A549 (cell line): ENCODE measurements at regions of chr19 and their contacts with region 1.

Region 1: GRCh38 chr19:48826606-48827020 is 9.7 kb downstream of the HSD17B14 start:
- DNase-seq: peak in 1 of 2 experiments; percentile 56
- ATAC-seq: peak; percentile 50 to 52; a peak in 2 of 6 replicates
- H3K4me3 ChIP-seq: no peak overlapping the region
- H3K27ac ChIP-seq: no peak overlapping the region
- H3K4me1 ChIP-seq: no peaks in the 10 kb centered on the region
- CTCF ChIP-seq: no peak
- EP300 ChIP-seq: no peak
- POLR2A ChIP-seq: no peak
- RAD21 ChIP-seq: no peak

Region 2: DNA sequence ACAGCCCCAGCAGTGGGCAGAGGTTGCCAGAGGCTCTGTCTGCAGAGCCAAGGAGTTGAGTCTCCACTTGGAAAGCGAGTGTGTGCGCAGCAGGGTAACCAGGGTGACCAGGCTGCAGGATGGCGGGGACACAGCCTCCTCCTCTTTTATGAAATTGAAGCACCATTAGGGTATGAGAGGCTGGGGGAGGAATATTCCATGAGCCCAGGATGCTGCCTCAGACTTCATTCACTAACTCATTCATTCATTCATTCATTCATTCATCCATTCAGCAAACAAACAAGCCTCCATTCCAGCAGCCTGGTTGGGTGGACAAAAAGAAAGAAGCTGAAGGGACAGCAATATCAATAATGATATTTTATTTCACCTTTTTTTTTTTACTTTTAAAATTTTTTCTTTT is 308.4 kb before region 1 on chr19:
- CTCF ChIA-PET with region 1: no interaction called
- POLR2A ChIA-PET with region 1: no interaction called
- DNase-seq: no peak
- ATAC-seq: no peak
- H3K4me3 ChIP-seq: no peak overlapping the region
- H3K27ac ChIP-seq: no peak overlapping the region
- H3K4me1 ChIP-seq: peaks cover 19% of the 10 kb centered on the region
- CTCF ChIP-seq: no peak
- EP300 ChIP-seq: no peak
- POLR2A ChIP-seq: no peak
- RAD21 ChIP-seq: no peak

Region 3: GRCh38 chr19:48780631-48781391 is 45.8 kb before region 1 on chr19:
- CTCF ChIA-PET with region 1: interaction called, 87 read pairs
- POLR2A ChIA-PET with region 1: no interaction called
- DNase-seq: peak in 1 of 2 experiments; percentile 62
- ATAC-seq: peak in 1 of 2 experiments; percentile 13; a peak in 3 of 6 replicates
- H3K4me3 ChIP-seq: no peak overlapping the region
- H3K27ac ChIP-seq: 0 out of 6 replicates have a peak overlapping the region, but pooled peaks of 1 of the 2 experiments have one; percentile 29
- H3K4me1 ChIP-seq: peaks cover 10% of the 10 kb centered on the region
- CTCF ChIP-seq: no peak
- EP300 ChIP-seq: no peak
- POLR2A ChIP-seq: no peak
- RAD21 ChIP-seq: no peak

Region 4: GRCh38 chr19:48812094-48812929 is 14.3 kb before region 1 on chr19:
- CTCF ChIA-PET with region 1: interaction called, 18 read pairs
- POLR2A ChIA-PET with region 1: interaction called, 3 read pairs
- DNase-seq: peak; percentile 53 to 66
- ATAC-seq: peak; percentile 7 to 31; a peak in 3 of 6 replicates
- H3K4me3 ChIP-seq: peak overlapping the region; percentile 59; the same call in 2 of the 3 replicates
- H3K27ac ChIP-seq: peak overlapping the region in 1 of 2 experiments; percentile 87; a peak in 2 of 6 replicates
- H3K4me1 ChIP-seq: peaks cover 27% of the 10 kb centered on the region
- CTCF ChIP-seq: no peak
- EP300 ChIP-seq: no peak
- POLR2A ChIP-seq: no peak
- RAD21 ChIP-seq: no peak

Region 5: DNA sequence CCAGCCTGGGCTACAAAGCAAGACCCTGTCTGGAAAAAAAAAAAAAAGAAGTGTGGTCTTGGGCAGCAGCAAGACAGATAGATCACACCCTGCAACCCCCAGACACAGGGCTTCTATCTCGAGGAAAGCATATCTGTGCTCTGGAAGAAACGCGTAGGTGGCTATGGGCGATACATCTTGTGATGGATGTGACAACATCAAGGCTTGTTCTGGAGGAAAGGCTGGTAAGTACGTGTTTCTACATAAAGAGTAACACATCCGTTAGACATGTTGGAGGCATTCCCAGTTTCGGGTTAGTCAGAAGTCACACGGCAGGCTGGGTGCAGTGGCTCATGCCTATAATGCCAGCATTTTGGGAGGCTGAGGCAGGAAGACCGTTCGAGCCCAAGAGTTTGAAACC is 100.3 kb after region 1 on chr19:
- CTCF ChIA-PET with region 1: no interaction called
- POLR2A ChIA-PET with region 1: no interaction called
- DNase-seq: peak; percentile 65 to 87
- ATAC-seq: peak; percentile 67 to 84
- H3K4me3 ChIP-seq: no peak overlapping the region
- H3K27ac ChIP-seq: peak overlapping the region; percentile 67 to 85
- H3K4me1 ChIP-seq: peaks cover 41% of the 10 kb centered on the region
- CTCF ChIP-seq: no peak
- EP300 ChIP-seq: peak in 1 of 2 experiments; percentile 39; a peak in 1 of 5 replicates
- POLR2A ChIP-seq: no peak
- RAD21 ChIP-seq: no peak